HCT116 (cell line): ENCODE measurements at regions of chr12 and their contacts with region 1.

Region 1: DNA sequence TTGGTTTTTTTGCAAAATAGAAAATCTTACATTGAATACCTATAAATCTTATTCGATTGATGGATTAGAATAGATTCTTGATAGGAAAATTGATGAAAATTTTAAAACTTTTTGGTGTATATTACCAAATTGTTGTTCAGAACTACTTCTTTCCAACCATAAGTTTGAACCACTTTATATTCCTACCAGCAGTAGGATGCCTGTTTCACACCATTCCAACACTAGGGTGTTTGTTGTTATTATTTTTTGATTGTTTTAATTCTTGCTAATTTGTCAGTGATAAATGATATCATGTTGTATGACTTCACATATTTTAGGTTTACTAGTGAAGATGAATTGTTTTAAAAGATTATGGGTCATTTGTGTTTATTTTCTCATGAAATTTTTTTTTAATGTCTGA is 43.4 kb downstream of the UTP20 start:
- DNase-seq: no peak
- ATAC-seq: peak; percentile 59; the same call in 1 of the 2 replicates
- H3K4me3 ChIP-seq: no peak overlapping the region
- H3K27ac ChIP-seq: no peak overlapping the region
- H3K4me1 ChIP-seq: no peaks in the 10 kb centered on the region
- H3K27me3 ChIP-seq: no peaks in the 10 kb centered on the region
- CTCF ChIP-seq: no peak
- POLR2A ChIP-seq: no peak
- RAD21 ChIP-seq: no peak

Region 2: GRCh38 chr12:100827901-100828520 is 495.2 kb before region 1 on chr12:
- CTCF ChIA-PET with region 1: interaction called, 30 read pairs
- POLR2A ChIA-PET with region 1: no interaction called
- RAD21 ChIA-PET with region 1: no interaction called
- intact Hi-C with region 1: loop called (anchors 1 kb)
- DNase-seq: peak; percentile 23
- ATAC-seq: peak; percentile 88
- H3K4me3 ChIP-seq: no peak overlapping the region
- H3K27ac ChIP-seq: no peak overlapping the region
- H3K4me1 ChIP-seq: peaks cover 4 to 13% of the 10 kb centered on the region in 2 experiments
- H3K27me3 ChIP-seq: no peaks in the 10 kb centered on the region
- CTCF ChIP-seq: peak; percentile 66 to 86 (median 76)
- POLR2A ChIP-seq: no peak
- RAD21 ChIP-seq: peak; percentile 89

Region 3: DNA sequence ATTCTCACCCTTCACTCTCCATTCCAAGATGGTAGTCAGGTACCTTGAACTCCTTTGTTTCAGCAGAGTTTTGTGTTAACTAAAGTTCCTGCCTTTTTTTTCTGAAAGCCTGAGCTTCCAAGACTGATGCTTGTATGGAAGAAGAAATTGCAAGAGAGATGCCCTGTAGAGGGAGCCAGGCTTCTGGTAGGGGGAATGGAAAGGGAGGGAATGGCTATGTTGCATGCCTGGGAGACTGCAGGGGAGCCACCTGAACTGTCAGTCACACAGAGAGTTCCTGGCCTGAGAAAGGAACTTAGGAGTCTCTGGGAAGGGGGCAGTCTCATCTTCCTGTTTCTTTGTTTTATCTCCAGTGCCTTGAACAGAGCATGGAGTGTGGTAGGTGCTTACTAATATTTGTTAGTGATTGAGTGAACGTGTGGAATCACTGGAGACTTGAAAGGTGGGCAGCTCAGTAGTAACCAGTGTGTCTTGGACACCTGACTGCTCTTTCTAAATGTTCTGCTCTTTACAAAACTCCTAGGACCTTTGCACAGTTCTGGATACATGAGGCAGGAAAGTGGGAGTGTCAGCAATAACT is 396.5 kb before region 1 on chr12:
- CTCF ChIA-PET with region 1: interaction called, 5 read pairs
- POLR2A ChIA-PET with region 1: no interaction called
- RAD21 ChIA-PET with region 1: no interaction called
- intact Hi-C with region 1: loop called (anchors 1 kb)
- DNase-seq: peak; percentile 48
- ATAC-seq: peak; percentile 94
- H3K4me3 ChIP-seq: no peak overlapping the region
- H3K27ac ChIP-seq: no peak overlapping the region
- H3K4me1 ChIP-seq: peaks cover 0 to 22% of the 10 kb centered on the region in 2 experiments; a peak in 2 of 4 replicates
- H3K27me3 ChIP-seq: no peaks in the 10 kb centered on the region
- CTCF ChIP-seq: peak; percentile 53 to 70 (median 65); a peak in 5 of 6 replicates
- POLR2A ChIP-seq: no peak
- RAD21 ChIP-seq: peak; percentile 78

Region 4: DNA sequence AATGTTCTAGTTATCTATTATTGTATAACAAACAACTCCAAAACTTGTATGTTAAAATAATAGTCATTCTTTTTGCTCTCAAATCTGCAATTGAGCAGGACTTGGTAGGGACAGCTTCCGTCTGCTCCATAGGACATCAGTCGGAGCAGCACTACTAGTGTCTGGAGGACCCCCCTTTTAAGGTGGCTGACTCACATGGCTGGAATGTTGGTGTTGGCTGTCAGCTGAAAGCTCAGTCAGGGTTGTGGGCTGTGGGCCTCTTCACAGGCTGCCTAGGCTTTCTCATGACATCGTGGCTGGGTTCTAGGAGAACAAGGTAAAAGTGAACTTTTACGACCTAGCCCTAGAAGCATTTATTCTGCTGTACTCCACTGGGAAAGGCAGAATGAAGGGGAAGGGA is 368.1 kb before region 1 on chr12:
- CTCF ChIA-PET with region 1: interaction called, 6 read pairs
- POLR2A ChIA-PET with region 1: no interaction called
- RAD21 ChIA-PET with region 1: no interaction called
- intact Hi-C with region 1: loop called (anchors 10 kb)
- DNase-seq: no peak
- ATAC-seq: peak; percentile 78
- H3K4me3 ChIP-seq: no peak overlapping the region
- H3K27ac ChIP-seq: no peak overlapping the region
- H3K4me1 ChIP-seq: peaks cover 9 to 20% of the 10 kb centered on the region in 2 experiments; a peak in 3 of 4 replicates
- H3K27me3 ChIP-seq: no peaks in the 10 kb centered on the region
- CTCF ChIP-seq: no peak
- POLR2A ChIP-seq: no peak
- RAD21 ChIP-seq: no peak

Region 5: GRCh38 chr12:101172316-101172715 is 150.9 kb before region 1 on chr12:
- CTCF ChIA-PET with region 1: interaction called, 3 read pairs
- POLR2A ChIA-PET with region 1: no interaction called
- RAD21 ChIA-PET with region 1: no interaction called
- intact Hi-C with region 1: loop called (anchors 2 kb)
- DNase-seq: no peak
- ATAC-seq: peak; percentile 60
- H3K4me3 ChIP-seq: no peak overlapping the region
- H3K27ac ChIP-seq: no peak overlapping the region
- H3K4me1 ChIP-seq: no peaks in the 10 kb centered on the region
- H3K27me3 ChIP-seq: no peaks in the 10 kb centered on the region
- CTCF ChIP-seq: peak in 2 of 3 experiments; percentile 24 to 38; a peak in 2 of 6 replicates
- POLR2A ChIP-seq: no peak
- RAD21 ChIP-seq: peak; percentile 46